A549 (cell line): ENCODE measurements at regions of chr16 and their contacts with region 1.

Region 1: GRCh38 chr16:30052671-30053372 is 12.7 kb upstream of the ALDOA start:
- DNase-seq: peak; percentile 94
- ATAC-seq: peak; percentile 74 to 81
- H3K4me3 ChIP-seq: peak overlapping the region; percentile 81
- H3K27ac ChIP-seq: peak overlapping the region; percentile 69 to 88
- H3K4me1 ChIP-seq: peaks cover 22% of the 10 kb centered on the region
- CTCF ChIP-seq: no peak
- EP300 ChIP-seq: no peak
- POLR2A ChIP-seq: no peak
- RAD21 ChIP-seq: no peak

Region 2: GRCh38 chr16:30041846-30042267 is 11.0 kb before region 1 on chr16:
- CTCF ChIA-PET with region 1: interaction called, 24 read pairs
- POLR2A ChIA-PET with region 1: no interaction called
- DNase-seq: no peak
- ATAC-seq: 0 out of 6 replicates have a peak, but pooled peaks of 1 of the 2 experiments have one; percentile 41
- H3K4me3 ChIP-seq: no peak overlapping the region
- H3K27ac ChIP-seq: no peak overlapping the region
- H3K4me1 ChIP-seq: no peaks in the 10 kb centered on the region
- CTCF ChIP-seq: peak; percentile 72
- EP300 ChIP-seq: no peak
- POLR2A ChIP-seq: no peak
- RAD21 ChIP-seq: peak; percentile 61 to 75